Activated CD4-positive, alpha-beta memory T cell treated with anti-CD3 and anti-CD28 coated beads for 36 hours (primary cell): ENCODE measurements at regions of chr10 and their contacts with region 1.

Region 1: GRCh38 chr10:43606322-43607198 is at the start of gene ZNF485:
- DNase-seq: peak; percentile 73
- H3K4me3 Mint-ChIP-seq: peak within 1 kb of the TSS; percentile 79
- H3K27ac Mint-ChIP-seq: peak within 1 kb of the TSS; percentile 69
- H3K4me1 Mint-ChIP-seq: peaks cover 32% of the 10 kb centered on the region
- H3K27me3 Mint-ChIP-seq: no peaks in the 10 kb centered on the region
- total RNA-seq, gene ZNF485: 4.1 to 4.7 TPM

Region 2: DNA sequence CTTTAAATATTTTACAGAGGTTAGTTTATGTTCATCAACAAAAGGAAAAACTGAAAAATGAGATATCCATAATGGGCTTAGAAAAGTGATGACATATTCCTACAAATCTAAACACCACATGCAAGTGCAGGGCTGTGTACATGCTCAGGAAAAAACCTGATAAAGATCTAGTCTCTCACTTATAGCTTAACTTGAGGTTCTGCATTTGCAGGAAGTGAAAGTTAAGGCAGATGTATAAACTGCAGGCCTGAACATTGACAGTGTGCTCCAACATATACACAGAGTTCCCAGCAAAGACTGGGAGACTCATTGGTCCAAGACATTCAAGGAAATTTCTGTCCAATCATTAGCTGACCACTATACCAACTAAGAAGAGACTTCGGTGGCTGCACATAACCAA is 593.5 kb before region 1 on chr10:
- CTCF ChIA-PET with region 1: no interaction called
- POLR2A ChIA-PET with region 1: no interaction called
- intact Hi-C with region 1: no loop called
- DNase-seq: no peak
- H3K4me3 Mint-ChIP-seq: no peak overlapping the region
- H3K27ac Mint-ChIP-seq: no peak overlapping the region
- H3K4me1 Mint-ChIP-seq: no peaks in the 10 kb centered on the region
- H3K27me3 Mint-ChIP-seq: peaks cover 4% of the 10 kb centered on the region

Region 3: DNA sequence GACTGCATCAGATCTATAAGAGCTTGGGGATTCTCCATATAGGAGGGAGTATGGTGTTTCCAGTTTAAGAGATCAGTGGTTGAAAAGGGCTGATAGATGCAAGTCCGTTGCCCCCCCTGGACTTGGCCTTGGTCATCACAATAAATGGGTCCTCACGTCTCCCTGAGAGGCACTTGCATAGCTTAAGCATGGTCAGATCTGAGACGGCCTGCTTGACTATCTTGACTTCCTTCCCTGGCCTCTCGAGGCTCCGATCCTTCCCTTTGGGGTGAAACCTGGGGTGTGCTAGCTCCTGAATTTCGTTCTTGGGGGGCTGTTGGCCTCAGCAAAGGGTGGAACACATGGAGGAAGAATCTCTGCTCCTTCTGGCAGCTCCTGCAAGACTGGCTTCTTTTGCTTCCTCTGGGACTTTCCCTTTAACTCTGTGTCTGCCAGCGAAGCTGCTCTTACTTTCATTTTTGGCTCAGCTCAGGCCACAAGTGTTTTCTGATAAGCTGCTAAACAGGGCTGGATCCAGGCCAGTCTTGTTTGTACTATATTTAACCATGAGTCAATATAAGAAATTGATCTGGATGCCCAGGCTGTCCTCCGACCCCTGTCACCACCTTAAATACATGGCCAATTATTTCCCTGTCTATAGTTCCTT is 11.5 kb before region 1 on chr10:
- CTCF ChIA-PET with region 1: no interaction called
- POLR2A ChIA-PET with region 1: interaction called, 7 read pairs
- intact Hi-C with region 1: loop called (anchors 1 kb)
- DNase-seq: peak; percentile 68
- H3K4me3 Mint-ChIP-seq: peak overlapping the region; percentile 38
- H3K27ac Mint-ChIP-seq: no peak overlapping the region
- H3K4me1 Mint-ChIP-seq: peaks cover 23% of the 10 kb centered on the region
- H3K27me3 Mint-ChIP-seq: peaks cover 7% of the 10 kb centered on the region

Region 4: GRCh38 chr10:43648398-43649184 is 42.0 kb after region 1 on chr10 and contains the start of gene ZNF32:
- CTCF ChIA-PET with region 1: no interaction called
- POLR2A ChIA-PET with region 1: interaction called, 3 read pairs
- intact Hi-C with region 1: loop called (anchors 1 kb)
- DNase-seq: peak; percentile 87
- H3K4me3 Mint-ChIP-seq: peak within 1 kb of the TSS; percentile 84
- H3K27ac Mint-ChIP-seq: peak within 1 kb of the TSS; percentile 87
- H3K4me1 Mint-ChIP-seq: peaks cover 15% of the 10 kb centered on the region
- H3K27me3 Mint-ChIP-seq: peaks cover 3% of the 10 kb centered on the region
- total RNA-seq, gene ZNF32: 12.2 to 13.5 TPM